ENCODE measurements at regions of chr7 and their contacts with region 1.

Region 1: GRCh38 chr7:140517546-140518369 is 38.5 kb upstream of the MKRN1 start:
- DNase-seq: peak; percentile 92 to 95
- H3K4me3 ChIP-seq: no peak overlapping the region
- H3K27ac ChIP-seq: peak overlapping the region in 4 of 5 donors; percentile 3 to 46 (median 34)
- H3K4me1 ChIP-seq: peaks cover 0 to 12% (median 4%) of the 10 kb centered on the region in 4 donors
- H3K27me3 ChIP-seq: no peaks in the 10 kb centered on the region
- CTCF ChIP-seq: peak in 5 of 7 experiments; percentile 83 to 89 (median 87)
- EP300 ChIP-seq: no peak
- POLR2A ChIP-seq: no peak

Region 2: GRCh38 chr7:140653319-140654108 is 135.8 kb after region 1 on chr7:
- intact Hi-C with region 1: loop called (anchors 5 kb)
- DNase-seq: peak; percentile 62 to 92
- H3K4me3 ChIP-seq: no peak overlapping the region
- H3K27ac ChIP-seq: no peak overlapping the region
- H3K4me1 ChIP-seq: peaks cover 16 to 47% (median 25%) of the 10 kb centered on the region in 4 donors
- H3K27me3 ChIP-seq: no peaks in the 10 kb centered on the region
- CTCF ChIP-seq: peak in 5 of 7 experiments; percentile 77 to 94 (median 80)
- EP300 ChIP-seq: no peak
- POLR2A ChIP-seq: no peak